A673 (cell line): ENCODE measurements at regions of chr1 and their contacts with region 1.

Region 1: GRCh38 chr1:96145492-96145891 is 576.1 kb upstream of the PTBP2 start:
- DNase-seq: no peak
- H3K4me3 ChIP-seq: no peak overlapping the region
- H3K27ac ChIP-seq: no peak overlapping the region
- H3K4me1 ChIP-seq: no peaks in the 10 kb centered on the region
- H3K27me3 ChIP-seq: no peaks in the 10 kb centered on the region
- CTCF ChIP-seq: no peak

Region 2: GRCh38 chr1:95572002-95572401 is 573.5 kb before region 1 on chr1:
- CTCF ChIA-PET with region 1: no interaction called
- POLR2A ChIA-PET with region 1: interaction called, 12 read pairs
- intact Hi-C with region 1: no loop called
- DNase-seq: no peak
- H3K4me3 ChIP-seq: no peak overlapping the region
- H3K27ac ChIP-seq: no peak overlapping the region
- H3K4me1 ChIP-seq: no peaks in the 10 kb centered on the region
- H3K27me3 ChIP-seq: peaks cover 15% of the 10 kb centered on the region
- CTCF ChIP-seq: no peak

Region 3: GRCh38 chr1:96059744-96060143 is 85.7 kb before region 1 on chr1:
- CTCF ChIA-PET with region 1: no interaction called
- POLR2A ChIA-PET with region 1: no interaction called
- intact Hi-C with region 1: no loop called
- DNase-seq: no peak
- H3K4me3 ChIP-seq: no peak overlapping the region
- H3K27ac ChIP-seq: no peak overlapping the region
- H3K4me1 ChIP-seq: no peaks in the 10 kb centered on the region
- H3K27me3 ChIP-seq: no peaks in the 10 kb centered on the region
- CTCF ChIP-seq: no peak

Region 4: DNA sequence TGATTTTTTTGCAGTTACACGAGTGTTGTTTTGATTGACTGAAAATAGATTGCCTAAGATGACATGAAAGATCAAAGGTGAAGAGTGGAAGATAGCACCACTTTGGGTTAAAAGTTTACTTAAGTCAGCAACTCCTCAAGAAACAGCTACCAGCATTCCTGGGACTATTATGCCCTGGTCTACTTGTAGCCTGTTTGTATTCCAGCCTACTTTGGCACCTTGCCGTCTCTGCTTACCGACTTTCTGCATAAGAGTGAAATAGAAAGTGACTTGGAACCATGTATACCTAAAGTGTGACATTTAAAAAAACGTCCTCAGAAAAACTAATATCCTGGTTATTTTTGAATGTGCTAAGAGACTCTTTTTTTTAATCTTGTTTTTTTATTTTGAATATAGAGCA is 55.4 kb before region 1 on chr1:
- CTCF ChIA-PET with region 1: no interaction called
- POLR2A ChIA-PET with region 1: no interaction called
- intact Hi-C with region 1: no loop called
- DNase-seq: no peak
- H3K4me3 ChIP-seq: no peak overlapping the region
- H3K27ac ChIP-seq: no peak overlapping the region
- H3K4me1 ChIP-seq: peaks cover 3% of the 10 kb centered on the region
- H3K27me3 ChIP-seq: no peaks in the 10 kb centered on the region
- CTCF ChIP-seq: no peak